ENCODE measurements at regions of chr6 and their contacts with region 1.

Region 1: DNA sequence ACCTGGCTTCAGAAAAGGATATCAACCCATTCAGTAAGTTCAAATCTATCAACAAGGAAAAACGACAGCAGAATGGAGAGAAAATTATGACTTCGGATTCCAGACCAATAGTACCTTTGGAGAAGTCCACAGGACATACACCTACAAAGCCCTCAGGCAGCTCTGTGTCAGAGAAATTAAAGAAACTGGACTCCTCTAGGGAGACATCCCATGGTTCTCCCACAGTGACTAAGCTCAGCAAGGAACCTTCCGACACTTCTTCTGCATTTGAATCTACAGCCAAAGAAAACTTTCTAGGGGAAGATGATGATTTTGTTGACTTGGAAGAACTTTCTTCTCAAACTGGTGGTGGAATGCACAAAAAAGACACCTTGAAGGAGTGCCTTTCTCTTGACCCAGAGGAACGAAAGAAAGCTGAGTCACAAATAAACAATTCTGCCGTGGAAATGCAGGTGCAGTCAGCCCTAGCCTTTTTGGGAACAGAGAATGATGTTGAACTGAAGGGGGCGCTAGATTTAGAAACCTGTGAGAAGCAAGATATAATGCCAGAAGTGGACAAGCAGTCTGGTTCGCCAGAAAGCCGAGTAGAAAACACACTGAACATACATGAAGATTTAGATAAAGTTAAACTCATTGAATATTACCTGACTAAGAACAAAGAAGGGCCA is 67.4 kb upstream of the HINT3 start:
- DNase-seq: peak; percentile 24
- ATAC-seq: peak; percentile 83
- H3K4me3 Mint-ChIP-seq: no peak overlapping the region
- H3K27ac Mint-ChIP-seq: no peak overlapping the region
- H3K4me1 Mint-ChIP-seq: peaks cover 4% of the 10 kb centered on the region; the same call in 1 of the 2 replicates
- H3K27me3 Mint-ChIP-seq: no peaks in the 10 kb centered on the region
- CTCF ChIP-seq: peak; percentile 42; the same call in 1 of the 2 replicates

Region 2: GRCh38 chr6:125872259-125872921 is 16.7 kb before region 1 on chr6:
- CTCF ChIA-PET with region 1: interaction called, 13 read pairs
- POLR2A ChIA-PET with region 1: no interaction called
- DNase-seq: no peak
- ATAC-seq: no peak
- H3K4me3 Mint-ChIP-seq: no peak overlapping the region
- H3K27ac Mint-ChIP-seq: no peak overlapping the region
- H3K4me1 Mint-ChIP-seq: peaks cover 14% of the 10 kb centered on the region
- H3K27me3 Mint-ChIP-seq: no peaks in the 10 kb centered on the region
- CTCF ChIP-seq: no peak

Region 3: GRCh38 chr6:125899726-125900182 is 10.6 kb after region 1 on chr6:
- CTCF ChIA-PET with region 1: interaction called, 33 read pairs
- POLR2A ChIA-PET with region 1: no interaction called
- DNase-seq: no peak
- ATAC-seq: peak; percentile 99
- H3K4me3 Mint-ChIP-seq: no peak overlapping the region
- H3K27ac Mint-ChIP-seq: no peak overlapping the region
- H3K4me1 Mint-ChIP-seq: peaks cover 10% of the 10 kb centered on the region
- H3K27me3 Mint-ChIP-seq: no peaks in the 10 kb centered on the region
- CTCF ChIP-seq: no peak

Region 4: GRCh38 chr6:125906158-125906998 is 17.3 kb after region 1 on chr6:
- CTCF ChIA-PET with region 1: interaction called, 33 read pairs
- POLR2A ChIA-PET with region 1: no interaction called
- DNase-seq: peak; percentile 80
- ATAC-seq: peak; percentile 98
- H3K4me3 Mint-ChIP-seq: no peak overlapping the region
- H3K27ac Mint-ChIP-seq: no peak overlapping the region
- H3K4me1 Mint-ChIP-seq: peaks cover 2% of the 10 kb centered on the region; the same call in 1 of the 2 replicates
- H3K27me3 Mint-ChIP-seq: no peaks in the 10 kb centered on the region; the same call in 1 of the 2 replicates
- CTCF ChIP-seq: peak; percentile 76

Region 5: DNA sequence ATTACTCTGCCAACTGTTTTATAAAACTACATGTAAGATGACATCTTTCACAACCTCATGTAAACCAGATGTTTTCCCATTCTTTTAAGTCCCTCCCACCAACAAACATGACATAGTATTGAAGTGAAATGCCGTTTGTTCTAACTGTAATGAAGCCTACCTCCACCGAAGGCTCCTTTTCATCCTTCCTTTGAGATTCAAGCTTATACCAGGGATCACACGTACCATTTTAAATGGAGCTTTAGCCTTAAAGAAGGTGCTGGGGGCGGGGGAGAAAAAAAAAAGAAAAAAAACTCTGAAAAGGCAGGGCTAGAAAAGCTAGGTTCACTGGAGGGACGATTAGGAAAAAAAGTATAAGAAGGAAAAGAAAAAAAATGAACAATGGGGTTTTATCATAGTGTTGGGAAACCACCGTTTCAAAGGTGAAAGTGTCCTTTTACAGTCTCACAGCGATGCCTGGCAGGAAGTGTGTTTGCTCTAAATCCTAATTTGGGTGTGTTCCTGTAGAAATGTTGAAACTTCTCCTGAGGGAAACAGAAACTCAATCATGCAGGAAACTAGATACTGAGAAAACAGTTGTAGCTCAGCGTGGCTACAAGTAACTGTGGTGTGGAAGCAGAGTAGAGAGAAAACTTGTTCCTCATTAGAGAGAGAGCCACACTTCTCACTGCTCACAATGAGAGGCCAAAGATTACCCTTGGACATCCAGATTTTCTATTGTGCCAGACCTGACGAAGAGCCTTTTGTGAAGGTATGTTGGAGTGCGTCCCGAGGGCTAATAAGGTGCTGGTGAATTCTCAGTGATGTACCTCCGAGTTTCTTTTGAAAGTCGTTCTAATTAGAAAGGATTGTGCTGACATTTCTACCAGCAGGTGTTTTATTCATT is 29.8 kb after region 1 on chr6:
- CTCF ChIA-PET with region 1: interaction called, 15 read pairs
- POLR2A ChIA-PET with region 1: no interaction called
- DNase-seq: no peak
- ATAC-seq: peak; percentile 27
- H3K4me3 Mint-ChIP-seq: no peak overlapping the region
- H3K27ac Mint-ChIP-seq: peak overlapping the region; percentile 46
- H3K4me1 Mint-ChIP-seq: peaks cover 24% of the 10 kb centered on the region
- H3K27me3 Mint-ChIP-seq: no peaks in the 10 kb centered on the region
- CTCF ChIP-seq: no peak

Region 6: GRCh38 chr6:126063512-126064146 is 174.5 kb after region 1 on chr6:
- CTCF ChIA-PET with region 1: no interaction called
- POLR2A ChIA-PET with region 1: no interaction called
- DNase-seq: no peak
- ATAC-seq: peak; percentile 63
- H3K4me3 Mint-ChIP-seq: no peak overlapping the region
- H3K27ac Mint-ChIP-seq: peak overlapping the region; percentile 3
- H3K4me1 Mint-ChIP-seq: peaks cover 9% of the 10 kb centered on the region
- H3K27me3 Mint-ChIP-seq: no peaks in the 10 kb centered on the region
- CTCF ChIP-seq: no peak